Spleen (tissue), 13 donors: ENCODE measurements at regions of chr12 and their contacts with region 1.

Region 1: GRCh38 chr12:110424237-110424636 is 20.7 kb upstream of the ANAPC7 start:
- DNase-seq: no peak
- H3K4me3 ChIP-seq: no peak overlapping the region
- H3K27ac ChIP-seq: no peak overlapping the region
- H3K4me1 ChIP-seq: no peaks in the 10 kb centered on the region
- H3K27me3 ChIP-seq: no peaks in the 10 kb centered on the region
- CTCF ChIP-seq: no peak
- POLR2A ChIP-seq: no peak

Region 2: DNA sequence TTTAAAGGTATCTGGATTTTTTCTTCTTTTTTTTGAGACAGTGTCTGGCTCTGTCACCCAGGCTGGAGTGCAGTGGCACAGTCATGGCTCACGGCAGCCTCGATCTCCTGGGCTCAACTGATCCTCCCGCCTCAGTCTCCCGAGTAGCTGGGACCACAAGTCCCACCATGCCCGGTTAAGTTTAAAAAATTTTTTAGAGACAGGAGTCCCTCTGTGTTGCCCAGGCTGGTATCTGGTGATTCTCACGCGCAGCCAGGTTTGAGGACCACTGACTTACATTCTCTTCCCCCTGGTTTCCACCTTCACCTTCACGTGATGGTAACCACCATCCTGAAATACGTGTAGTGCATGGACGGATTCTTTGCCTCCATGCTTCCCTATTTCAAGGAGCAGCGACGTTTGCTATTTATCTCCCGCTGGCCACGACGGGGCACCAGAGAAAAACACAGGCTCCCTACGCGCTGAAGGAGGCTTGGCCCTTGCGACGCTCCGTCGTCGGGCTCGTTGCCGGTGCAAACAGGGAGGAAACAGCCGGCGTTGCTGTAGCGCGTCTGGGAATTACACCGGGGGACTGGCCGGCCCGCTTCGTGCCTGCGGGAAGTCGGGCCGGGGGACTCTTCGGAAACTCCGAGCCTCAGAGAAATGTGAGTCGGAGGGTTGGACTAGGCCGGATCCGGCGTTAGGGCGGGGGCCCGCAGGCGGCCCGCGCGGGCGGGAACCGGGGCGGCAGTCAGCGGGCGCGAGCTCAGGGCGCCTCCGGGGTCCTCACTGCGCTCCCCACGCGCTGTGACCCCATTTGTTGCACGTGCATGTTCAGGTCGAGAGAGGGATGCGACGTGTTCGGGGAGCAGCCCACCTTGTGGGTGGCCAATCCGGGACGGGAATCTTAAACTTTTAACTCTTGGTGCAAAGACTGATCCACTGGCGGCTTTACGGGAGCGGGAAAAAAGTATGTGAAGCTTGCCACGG is 524.2 kb before region 1 on chr12 and contains the start of gene TCHP:
- intact Hi-C with region 1: no loop called
- DNase-seq: peak; percentile 96
- H3K4me3 ChIP-seq: peak within 1 kb of the TSS; percentile 73 to 97 (median 91)
- H3K27ac ChIP-seq: peak within 1 kb of the TSS; percentile 66 to 90 (median 85)
- H3K4me1 ChIP-seq: peaks cover 13 to 42% (median 31%) of the 10 kb centered on the region in 6 donors
- H3K27me3 ChIP-seq: no peaks in the 10 kb centered on the region
- CTCF ChIP-seq: peak in 8 of 11 experiments; percentile 10 to 42 (median 32)
- POLR2A ChIP-seq: peak in 1 of 3 donors; percentile 48
- total RNA-seq, gene TCHP: 21.8 to 35.9 (median 29.0) TPM

Region 3: DNA sequence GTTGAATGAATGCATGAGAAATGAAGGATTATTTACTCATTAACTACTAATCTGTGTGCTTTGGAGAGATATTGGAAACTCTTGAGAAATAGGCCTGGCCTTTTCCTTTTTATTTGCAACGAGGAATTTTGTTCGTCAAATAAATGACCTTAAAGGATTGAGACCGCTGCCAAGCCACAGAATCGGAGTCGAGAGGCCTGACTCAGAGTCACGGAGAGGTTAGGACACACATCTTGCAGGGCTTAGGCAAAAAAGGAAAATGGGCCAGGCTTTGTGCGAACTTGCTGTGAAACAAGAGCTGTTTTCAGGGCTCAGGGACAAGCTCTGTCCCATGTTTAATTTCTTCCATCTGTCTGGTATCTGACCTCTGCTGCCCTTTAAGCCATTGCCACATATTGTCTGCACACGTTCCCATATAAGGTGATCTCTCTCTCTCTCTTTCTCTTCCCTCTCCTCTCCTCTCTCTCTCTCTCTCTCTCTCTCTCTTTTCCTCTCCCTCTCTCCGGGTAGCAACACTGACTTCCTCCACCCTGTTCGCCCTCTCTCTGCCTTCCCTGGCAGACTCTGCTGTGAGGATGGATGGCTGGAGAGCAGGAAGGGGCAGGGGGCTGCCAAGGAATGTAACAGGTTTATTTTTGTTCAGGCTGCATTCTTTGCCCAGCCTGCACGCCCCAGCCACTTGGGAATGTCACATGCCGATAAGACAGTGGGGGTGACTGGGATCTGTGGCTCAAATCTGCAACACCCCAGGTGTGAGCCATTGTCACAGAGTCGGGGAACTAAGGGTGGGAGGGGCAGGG is 315.0 kb before region 1 on chr12:
- intact Hi-C with region 1: loop called (anchors 5 kb)
- DNase-seq: no peak
- H3K4me3 ChIP-seq: no peak overlapping the region
- H3K27ac ChIP-seq: peak overlapping the region in 7 of 8 donors; percentile 44 to 77 (median 60)
- H3K4me1 ChIP-seq: peaks cover 0 to 9% (median 0%) of the 10 kb centered on the region in 6 donors
- H3K27me3 ChIP-seq: no peaks in the 10 kb centered on the region
- CTCF ChIP-seq: peak in 2 of 11 experiments; percentile 16 to 19
- POLR2A ChIP-seq: no peak

Region 4: GRCh38 chr12:110563702-110564640 is 139.7 kb after region 1 on chr12:
- intact Hi-C with region 1: no loop called
- DNase-seq: no peak
- H3K4me3 ChIP-seq: no peak overlapping the region
- H3K27ac ChIP-seq: peak overlapping the region; percentile 22 to 81 (median 68)
- H3K4me1 ChIP-seq: peaks cover 37 to 91% (median 74%) of the 10 kb centered on the region in 6 donors
- H3K27me3 ChIP-seq: no peaks in the 10 kb centered on the region
- CTCF ChIP-seq: no peak
- POLR2A ChIP-seq: no peak